Activated naive CD4-positive, alpha-beta T cell treated with anti-CD3 and anti-CD28 coated beads, Interleukin-2, amount 10 ng/mL, durations not matched to agents 7 days and 5 days (primary cell): ENCODE measurements at regions of chr14 and their contacts with region 1.

Region 1: GRCh38 chr14:24241829-24242443 is 487 bp downstream of the TINF2 start:
- DNase-seq: peak; percentile 96
- H3K4me3 Mint-ChIP-seq: peak overlapping the region; percentile 81
- H3K27ac Mint-ChIP-seq: peak overlapping the region; percentile 97
- H3K4me1 Mint-ChIP-seq: peaks cover 67% of the 10 kb centered on the region
- H3K27me3 Mint-ChIP-seq: no peaks in the 10 kb centered on the region

Region 2: DNA sequence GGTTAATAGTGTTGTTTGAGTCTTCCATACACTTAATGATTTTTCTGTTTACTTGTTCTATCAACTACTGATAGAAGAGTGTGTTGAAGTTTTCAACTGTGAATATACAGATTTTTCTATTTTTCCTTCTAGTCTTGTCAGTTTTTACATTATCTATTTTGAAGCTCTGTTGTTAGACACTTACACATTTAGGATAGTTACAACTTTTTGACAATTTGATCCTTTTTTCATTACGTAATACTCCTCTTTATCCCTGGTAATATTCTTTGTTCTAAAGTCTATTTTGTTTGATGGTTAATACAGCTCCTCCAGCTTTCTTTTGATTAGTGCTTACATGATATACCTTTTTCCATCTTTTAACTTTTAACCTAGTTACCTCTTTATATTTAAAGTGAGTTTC is 560.6 kb before region 1 on chr14:
- CTCF ChIA-PET with region 1: no interaction called
- DNase-seq: no peak
- H3K4me3 Mint-ChIP-seq: no peak overlapping the region
- H3K27ac Mint-ChIP-seq: no peak overlapping the region
- H3K4me1 Mint-ChIP-seq: no peaks in the 10 kb centered on the region
- H3K27me3 Mint-ChIP-seq: peaks cover 12% of the 10 kb centered on the region

Region 3: DNA sequence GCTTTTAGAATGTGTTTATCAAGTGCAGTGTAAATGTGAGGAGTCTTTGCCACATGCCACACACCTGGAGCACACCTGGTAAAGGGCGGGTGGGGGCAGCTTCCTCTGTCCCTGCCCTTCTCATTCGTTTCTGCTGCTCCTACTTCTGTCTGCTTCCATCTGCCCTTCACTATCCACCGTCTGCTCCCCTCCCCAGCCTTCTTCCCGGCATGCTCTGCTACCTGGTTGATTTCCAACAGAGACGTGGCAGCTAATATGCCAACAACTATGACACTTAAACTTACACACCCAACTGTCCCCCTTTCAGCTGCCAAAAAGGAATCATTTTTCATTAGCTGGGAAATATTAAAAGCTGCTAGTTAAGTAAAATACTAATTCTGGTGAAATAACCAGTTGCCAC is 199.2 kb before region 1 on chr14:
- CTCF ChIA-PET with region 1: no interaction called
- DNase-seq: no peak
- H3K4me3 Mint-ChIP-seq: no peak overlapping the region
- H3K27ac Mint-ChIP-seq: no peak overlapping the region
- H3K4me1 Mint-ChIP-seq: no peaks in the 10 kb centered on the region
- H3K27me3 Mint-ChIP-seq: peaks cover 40% of the 10 kb centered on the region

Region 4: GRCh38 chr14:24093901-24094761 is 147.8 kb before region 1 on chr14 and contains the start of gene PCK2:
- CTCF ChIA-PET with region 1: no interaction called
- DNase-seq: peak; percentile 86
- H3K4me3 Mint-ChIP-seq: peak within 1 kb of the TSS; percentile 92
- H3K27ac Mint-ChIP-seq: peak within 1 kb of the TSS; percentile 92
- H3K4me1 Mint-ChIP-seq: peaks cover 39% of the 10 kb centered on the region
- H3K27me3 Mint-ChIP-seq: no peaks in the 10 kb centered on the region

Region 5: GRCh38 chr14:24271134-24271833 is 29.3 kb after region 1 on chr14 and contains the start of gene RABGGTA:
- CTCF ChIA-PET with region 1: interaction called, 29 read pairs
- DNase-seq: peak; percentile 93
- H3K4me3 Mint-ChIP-seq: peak within 1 kb of the TSS; percentile 85
- H3K27ac Mint-ChIP-seq: peak within 1 kb of the TSS; percentile 97
- H3K4me1 Mint-ChIP-seq: peaks cover 54% of the 10 kb centered on the region
- H3K27me3 Mint-ChIP-seq: no peaks in the 10 kb centered on the region

Region 6: GRCh38 chr14:24289649-24290249 is 47.8 kb after region 1 on chr14:
- CTCF ChIA-PET with region 1: interaction called, 34 read pairs
- DNase-seq: peak; percentile 60
- H3K4me3 Mint-ChIP-seq: no peak overlapping the region
- H3K27ac Mint-ChIP-seq: no peak overlapping the region
- H3K4me1 Mint-ChIP-seq: peaks cover 21% of the 10 kb centered on the region
- H3K27me3 Mint-ChIP-seq: no peaks in the 10 kb centered on the region

Region 7: DNA sequence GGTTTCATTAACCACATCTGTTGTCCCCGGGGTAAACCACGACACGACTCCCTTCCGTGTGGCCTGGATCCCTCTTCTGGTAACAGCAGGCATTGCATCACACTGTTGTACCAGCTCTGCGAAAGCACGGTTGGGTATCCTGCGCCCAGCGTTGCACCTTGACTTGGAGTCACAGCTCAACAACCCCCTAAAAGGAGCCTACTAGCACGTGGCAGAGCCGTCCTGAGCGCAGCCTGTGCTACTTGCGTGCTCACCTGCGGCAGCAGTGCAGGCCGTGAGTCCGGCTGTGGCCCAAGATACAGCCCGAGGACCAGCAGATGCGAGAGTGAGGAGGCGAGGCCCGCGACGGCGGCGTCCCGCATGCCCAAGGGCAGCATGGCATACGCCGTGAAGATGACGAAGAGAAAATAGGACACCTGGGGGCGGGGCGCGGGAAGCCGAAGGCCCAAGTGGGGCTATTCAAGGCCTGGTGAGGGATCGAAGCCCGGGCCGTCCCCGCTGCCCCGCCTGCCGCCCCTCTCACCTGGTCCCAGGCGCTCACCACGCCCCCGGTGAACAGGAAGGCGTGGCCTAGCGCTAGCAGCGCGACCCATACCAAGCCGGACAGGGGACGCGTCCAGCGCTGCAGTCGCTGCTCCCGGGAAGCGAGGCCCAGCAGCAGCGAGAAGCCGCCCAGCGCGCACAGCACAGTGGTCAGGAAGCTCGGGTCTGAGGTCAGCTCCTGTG is 90.5 kb after region 1 on chr14:
- CTCF ChIA-PET with region 1: interaction called, 17 read pairs
- DNase-seq: peak; percentile 92
- H3K4me3 Mint-ChIP-seq: peak overlapping the region; percentile 66
- H3K27ac Mint-ChIP-seq: peak overlapping the region; percentile 46
- H3K4me1 Mint-ChIP-seq: peaks cover 63% of the 10 kb centered on the region
- H3K27me3 Mint-ChIP-seq: peaks cover 79% of the 10 kb centered on the region

Region 8: DNA sequence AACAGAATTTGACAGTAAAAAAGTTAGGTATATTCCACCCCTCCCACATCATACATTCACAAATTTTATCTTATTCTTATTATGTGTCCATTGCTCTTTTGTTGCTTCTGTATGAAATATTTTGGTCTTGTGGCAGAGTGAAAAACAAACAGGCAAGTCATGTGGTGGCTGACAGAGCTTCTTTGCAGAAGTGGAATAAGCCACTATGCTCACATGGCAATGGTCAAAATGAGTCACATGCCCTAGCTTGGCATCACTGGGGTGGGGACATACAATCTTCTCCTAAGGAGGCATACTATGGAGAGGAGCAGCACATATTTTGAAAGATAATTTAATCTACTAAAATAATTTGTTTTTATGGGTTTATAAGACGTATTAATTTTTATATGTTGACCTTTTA is 293.8 kb after region 1 on chr14:
- CTCF ChIA-PET with region 1: no interaction called
- DNase-seq: no peak
- H3K4me3 Mint-ChIP-seq: no peak overlapping the region
- H3K27ac Mint-ChIP-seq: no peak overlapping the region
- H3K4me1 Mint-ChIP-seq: no peaks in the 10 kb centered on the region
- H3K27me3 Mint-ChIP-seq: peaks cover 4% of the 10 kb centered on the region